ENCODE measurements at regions of chr6 and their contacts with region 1.

Region 1: GRCh38 chr6:16602035-16602434 is 159.2 kb downstream of the ATXN1 start:
- DNase-seq: peak; percentile 13
- H3K4me3 Mint-ChIP-seq: no peak overlapping the region
- H3K27ac Mint-ChIP-seq: peak overlapping the region; percentile 74
- H3K4me1 Mint-ChIP-seq: peaks cover 37% of the 10 kb centered on the region
- H3K27me3 Mint-ChIP-seq: no peaks in the 10 kb centered on the region

Region 2: GRCh38 chr6:16540804-16541752 is 61.0 kb before region 1 on chr6:
- intact Hi-C with region 1: loop called (anchors 2 kb)
- DNase-seq: no peak
- H3K4me3 Mint-ChIP-seq: no peak overlapping the region
- H3K27ac Mint-ChIP-seq: peak overlapping the region; percentile 58
- H3K4me1 Mint-ChIP-seq: peaks cover 49% of the 10 kb centered on the region
- H3K27me3 Mint-ChIP-seq: no peaks in the 10 kb centered on the region

Region 3: DNA sequence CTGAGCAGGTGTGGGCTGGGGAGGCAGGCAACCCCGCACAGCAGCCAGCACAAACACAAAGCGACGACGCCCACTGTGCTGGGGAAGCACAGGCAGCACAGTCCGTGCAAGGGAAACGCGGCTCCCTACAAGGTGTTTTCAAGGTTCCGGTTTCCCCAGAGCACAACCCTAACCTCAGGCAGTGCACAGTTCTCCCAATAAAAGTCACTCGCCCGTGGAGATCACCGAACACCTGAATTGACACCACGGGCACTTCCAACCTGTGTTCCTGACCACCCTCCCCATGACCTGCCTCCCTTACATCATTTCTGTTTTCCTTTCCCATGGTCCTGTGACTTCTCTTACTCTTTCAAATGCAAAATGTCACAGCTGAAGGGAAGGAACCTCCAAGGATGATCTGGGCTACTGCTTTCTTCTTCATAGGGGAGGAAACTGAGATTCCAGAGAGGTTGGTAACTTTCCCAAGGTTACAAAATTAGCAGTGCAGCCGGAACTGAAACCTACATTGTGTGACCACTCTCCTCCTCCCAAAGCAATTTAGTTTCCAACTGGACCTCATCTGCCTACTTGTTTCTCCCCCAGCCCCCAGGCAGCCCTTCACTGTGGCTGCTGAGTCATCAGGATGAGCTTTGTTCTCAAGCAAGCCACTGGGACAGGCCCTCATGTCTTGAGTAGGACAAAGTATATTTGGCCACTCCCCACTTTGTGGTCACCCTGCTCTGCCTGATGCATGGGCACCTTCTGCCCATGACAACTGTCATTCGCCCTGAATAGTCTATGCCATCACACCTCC is 34.0 kb after region 1 on chr6:
- intact Hi-C with region 1: loop called (anchors 5 kb)
- DNase-seq: no peak
- H3K4me3 Mint-ChIP-seq: no peak overlapping the region
- H3K27ac Mint-ChIP-seq: peak overlapping the region; percentile 56
- H3K4me1 Mint-ChIP-seq: peaks cover 49% of the 10 kb centered on the region
- H3K27me3 Mint-ChIP-seq: no peaks in the 10 kb centered on the region

Measured in activated T-helper 2 cell treated with anti-CD3 and anti-CD28 coated beads, Interferon-gamma antibody, Interleukin-2, Interleukin-4, amounts not matched to agents 10 μg/mL and 5 μg/mL and 100 μg/mL, durations not matched to agents 14 hours and 24 hours and 36 hours (primary cell).